Heart right ventricle (tissue), 16 donors: ENCODE measurements at regions of chr3 and their contacts with region 1.

Region 1: GRCh38 chr3:185585859-185586685 is at the start of gene SENP2:
- DNase-seq: peak; percentile 99
- ATAC-seq: peak; percentile 97 to 99 (median 98)
- H3K4me3 ChIP-seq: peak within 1 kb of the TSS; percentile 69 to 99 (median 91)
- H3K27ac ChIP-seq: peak within 1 kb of the TSS; percentile 72 to 99 (median 94)
- H3K4me1 ChIP-seq: peaks cover 7 to 39% (median 28%) of the 10 kb centered on the region in 9 donors
- H3K27me3 ChIP-seq: no peaks in the 10 kb centered on the region
- CTCF ChIP-seq: no peak
- total RNA-seq, gene SENP2: 26.6 to 46.5 (median 39.0) TPM

Region 2: DNA sequence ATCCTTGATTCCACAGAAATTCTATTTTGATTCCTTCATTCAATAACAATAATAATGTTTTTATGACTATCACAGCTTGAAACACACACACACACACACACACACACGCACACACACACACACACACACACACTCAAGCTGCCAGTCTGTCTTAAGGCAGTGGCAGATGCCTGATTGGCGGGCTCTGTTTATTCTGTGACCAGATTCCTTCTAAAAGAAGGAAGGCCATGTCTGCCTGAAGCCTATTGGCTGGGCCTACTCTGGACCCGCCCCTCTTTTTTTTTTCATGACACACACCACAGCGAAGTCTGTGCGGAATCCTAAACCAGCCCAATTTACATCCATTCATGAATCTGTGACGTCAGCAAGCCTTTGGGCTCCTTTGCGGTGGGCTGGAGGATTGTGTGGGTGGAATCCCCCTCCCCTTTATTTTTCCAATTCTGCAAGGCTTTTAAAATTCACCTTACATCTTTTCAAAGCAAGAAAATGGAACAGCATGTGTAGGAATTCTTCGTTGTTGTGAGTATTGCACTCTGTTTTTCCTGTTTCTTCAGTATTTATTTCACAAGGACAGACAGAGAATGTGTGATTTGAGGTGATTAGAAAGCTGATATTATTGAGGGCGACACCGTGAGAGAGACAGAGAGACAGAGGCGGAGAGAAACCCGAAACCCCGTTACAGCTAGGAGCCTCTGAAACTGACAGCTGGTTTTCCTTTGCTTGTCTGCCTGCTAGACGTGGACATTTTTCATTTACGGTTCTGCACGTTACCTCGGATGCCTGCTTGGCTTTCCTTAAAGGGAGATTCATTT is 223.0 kb before region 1 on chr3 and contains the start of gene MAP3K13:
- intact Hi-C with region 1: loop called in 1 of 10 experiments (anchors 10 kb)
- DNase-seq: peak; percentile 62 to 87
- ATAC-seq: peak; percentile 96 to 100 (median 100)
- H3K4me3 ChIP-seq: peak within 1 kb of the TSS; percentile 48 to 72 (median 64)
- H3K27ac ChIP-seq: peak within 1 kb of the TSS in 9 of 10 donors; percentile 46 to 70 (median 61)
- H3K4me1 ChIP-seq: peaks cover 0 to 14% (median 9%) of the 10 kb centered on the region in 9 donors
- H3K27me3 ChIP-seq: peaks cover 0 to 27% (median 0%) of the 10 kb centered on the region in 7 donors
- CTCF ChIP-seq: no peak
- total RNA-seq, gene MAP3K13: 7.1 to 14.9 (median 11.3) TPM

Region 3: DNA sequence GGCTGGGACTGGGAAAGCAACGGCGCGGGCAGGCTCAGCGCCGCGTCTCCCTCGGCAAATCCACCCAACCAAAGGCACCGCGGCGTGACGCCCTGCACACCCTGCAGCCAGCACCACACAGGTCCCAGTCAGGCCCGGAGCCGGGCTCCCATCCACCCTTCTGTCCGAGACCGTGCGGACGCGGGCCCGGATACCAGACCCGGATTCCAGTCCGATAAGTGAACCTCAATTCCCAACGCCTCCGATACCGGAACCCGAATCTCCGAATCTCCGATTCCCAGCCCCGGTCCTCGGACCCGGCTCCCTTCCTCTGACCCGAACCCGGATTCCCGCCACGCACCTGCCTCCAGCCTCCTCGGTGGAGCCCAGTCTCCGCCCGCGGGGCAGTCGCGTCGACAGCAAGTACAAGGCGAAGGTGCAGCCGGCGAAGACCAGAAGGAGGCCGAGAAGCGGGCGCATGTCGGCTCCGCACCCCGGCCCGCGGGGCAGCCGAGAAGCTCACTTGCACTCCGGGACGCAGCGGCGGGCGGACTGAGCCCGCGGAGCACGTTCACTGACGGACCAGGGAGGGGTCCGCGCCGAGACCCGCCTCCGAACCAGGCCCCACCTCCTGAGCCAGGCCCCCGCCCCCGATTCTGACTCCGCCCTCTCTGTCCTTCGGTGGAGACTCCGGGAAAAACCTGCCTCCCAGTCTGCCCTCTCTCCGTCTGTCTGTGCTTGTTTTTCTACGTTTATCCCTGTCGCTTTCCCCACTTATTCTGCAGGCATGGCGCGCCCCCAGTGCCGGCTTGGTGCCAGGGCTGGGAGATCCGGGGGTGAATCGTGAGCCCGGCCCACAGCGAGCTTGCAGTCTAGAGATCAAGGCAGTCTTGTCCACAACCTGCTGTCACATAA is 87.3 kb before region 1 on chr3 and contains the start of gene TMEM41A:
- intact Hi-C with region 1: loop called in 4 of 10 experiments (anchors 2 to 10 kb)
- DNase-seq: peak; percentile 95
- ATAC-seq: peak; percentile 98 to 99 (median 99)
- H3K4me3 ChIP-seq: peak within 1 kb of the TSS; percentile 62 to 99 (median 86)
- H3K27ac ChIP-seq: peak within 1 kb of the TSS; percentile 30 to 92 (median 88)
- H3K4me1 ChIP-seq: peaks cover 6 to 37% (median 20%) of the 10 kb centered on the region in 9 donors
- H3K27me3 ChIP-seq: no peaks in the 10 kb centered on the region
- CTCF ChIP-seq: peak in 1 of 9 donors; percentile 8
- total RNA-seq, gene TMEM41A: 8.8 to 12.7 (median 11.5) TPM